SK-N-SH (cell line): ENCODE measurements at regions of chr9 and their contacts with region 1.

Region 1: GRCh38 chr9:128117613-128118471 is 9.7 kb downstream of the PTGES2 start:
- DNase-seq: peak; percentile 91
- H3K4me3 ChIP-seq: peak overlapping the region in 1 of 2 experiments; percentile 42; a peak in 1 of 4 replicates
- H3K27ac ChIP-seq: no peak overlapping the region
- H3K4me1 ChIP-seq: peaks cover 4 to 7% of the 10 kb centered on the region in 2 experiments; a peak in 1 of 4 replicates
- H3K27me3 ChIP-seq: no peaks in the 10 kb centered on the region
- CTCF ChIP-seq: peak; percentile 100
- EP300 ChIP-seq: no peak
- RAD21 ChIP-seq: peak; percentile 92

Region 2: DNA sequence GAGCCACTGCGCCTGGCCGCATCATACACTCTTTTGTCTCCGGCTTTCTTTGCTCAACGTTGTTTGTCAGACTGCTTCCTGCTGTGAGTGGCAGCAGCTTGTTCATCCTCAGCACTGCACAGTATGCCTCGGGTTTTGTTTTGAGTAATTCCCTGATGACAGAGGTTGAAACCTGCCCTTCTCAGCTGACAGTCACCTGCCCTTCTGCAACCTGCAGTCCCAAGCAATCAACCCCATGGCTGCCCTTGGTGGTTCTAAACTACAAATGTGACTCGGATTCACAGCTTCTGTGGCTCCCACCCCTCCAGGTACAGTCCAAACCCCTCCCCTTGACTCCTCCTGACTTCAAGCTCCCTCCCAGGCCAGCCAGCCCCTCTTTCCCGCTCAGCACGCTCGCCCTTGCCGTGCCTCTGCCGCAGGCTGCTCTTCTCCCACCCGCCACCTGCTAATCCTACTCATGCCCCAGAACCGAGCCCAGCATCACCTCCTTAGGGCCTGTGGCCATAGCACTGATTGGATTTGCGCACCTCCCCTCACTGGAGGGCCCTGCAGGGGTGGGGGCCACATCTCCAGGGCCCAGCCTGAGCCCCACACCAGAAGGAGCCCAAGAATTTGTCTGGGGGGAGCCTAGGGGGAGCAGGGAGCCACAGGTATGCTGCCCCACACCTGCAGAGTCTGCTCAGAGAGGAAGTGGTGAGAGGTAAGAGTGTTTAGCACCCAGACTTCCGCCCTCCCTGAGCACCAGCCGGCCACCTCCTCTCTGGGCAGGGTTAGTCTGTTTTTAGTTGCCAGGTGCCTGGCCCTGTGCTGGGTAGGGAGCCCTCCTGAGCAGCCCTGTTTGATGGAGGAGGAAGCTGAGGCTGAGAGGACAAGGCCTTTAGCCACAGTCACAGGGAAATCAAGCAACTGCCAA is 147.2 kb before region 1 on chr9:
- CTCF ChIA-PET with region 1: interaction called, 11 read pairs
- POLR2A ChIA-PET with region 1: interaction called, 3 read pairs
- DNase-seq: peak; percentile 10
- H3K4me3 ChIP-seq: no peak overlapping the region; a peak in 1 of 4 replicates
- H3K27ac ChIP-seq: peak overlapping the region; percentile 91 to 93
- H3K4me1 ChIP-seq: peaks cover 92 to 100% of the 10 kb centered on the region in 2 experiments
- H3K27me3 ChIP-seq: no peaks in the 10 kb centered on the region
- CTCF ChIP-seq: no peak
- EP300 ChIP-seq: no peak
- RAD21 ChIP-seq: no peak

Region 3: GRCh38 chr9:128051932-128052709 is 65.7 kb before region 1 on chr9:
- CTCF ChIA-PET with region 1: interaction called, 16 read pairs
- POLR2A ChIA-PET with region 1: no interaction called
- DNase-seq: no peak
- H3K4me3 ChIP-seq: no peak overlapping the region
- H3K27ac ChIP-seq: no peak overlapping the region
- H3K4me1 ChIP-seq: peaks cover 8 to 13% of the 10 kb centered on the region in 2 experiments; a peak in 3 of 4 replicates
- H3K27me3 ChIP-seq: no peaks in the 10 kb centered on the region
- CTCF ChIP-seq: no peak
- EP300 ChIP-seq: no peak
- RAD21 ChIP-seq: no peak

Region 4: GRCh38 chr9:128094166-128094967 is 23.5 kb before region 1 on chr9:
- CTCF ChIA-PET with region 1: interaction called, 246 read pairs
- POLR2A ChIA-PET with region 1: interaction called, 3 read pairs
- DNase-seq: peak; percentile 88
- H3K4me3 ChIP-seq: peak overlapping the region; percentile 28 to 49
- H3K27ac ChIP-seq: peak overlapping the region; percentile 77 to 96
- H3K4me1 ChIP-seq: peaks cover 57 to 60% of the 10 kb centered on the region in 2 experiments
- H3K27me3 ChIP-seq: no peaks in the 10 kb centered on the region
- CTCF ChIP-seq: no peak
- EP300 ChIP-seq: no peak
- RAD21 ChIP-seq: no peak

Region 5: DNA sequence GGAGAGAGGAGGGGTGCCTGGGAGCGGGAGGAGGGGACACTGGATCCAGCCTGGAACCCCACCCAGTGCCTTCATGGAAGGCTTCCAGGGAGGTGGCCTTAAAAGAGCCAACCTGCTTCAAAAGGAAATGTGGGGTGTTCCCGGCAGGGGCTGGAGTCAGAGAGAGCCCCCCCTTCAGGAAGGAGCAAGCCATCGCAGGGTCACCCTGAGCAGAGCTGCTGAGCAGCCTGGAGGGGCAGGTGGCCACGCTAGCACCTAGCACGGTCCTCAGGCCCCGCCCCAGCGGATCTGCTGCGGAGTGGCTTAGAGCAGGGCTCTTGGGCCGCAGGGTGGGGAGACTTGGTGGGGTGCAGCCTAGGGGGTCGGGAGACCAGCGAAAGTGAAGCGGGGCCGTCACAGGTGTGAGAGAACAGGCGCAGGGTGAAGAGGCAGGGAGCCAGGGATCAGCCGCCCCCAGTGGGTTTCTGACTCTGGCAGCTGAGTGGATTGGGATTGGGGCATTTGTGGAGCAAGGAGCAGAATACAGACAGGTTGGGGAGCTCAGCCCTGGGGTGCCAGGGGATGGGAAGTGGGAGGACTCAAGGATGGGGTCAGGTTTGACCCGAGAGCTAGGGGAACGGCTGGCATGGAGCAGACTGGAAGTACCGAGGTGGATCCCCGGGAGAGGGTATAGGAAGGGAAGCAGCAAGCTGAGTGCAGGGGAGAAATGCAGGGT is 32.9 kb after region 1 on chr9:
- CTCF ChIA-PET with region 1: interaction called, 20 read pairs
- POLR2A ChIA-PET with region 1: no interaction called
- DNase-seq: peak; percentile 64
- H3K4me3 ChIP-seq: no peak overlapping the region
- H3K27ac ChIP-seq: no peak overlapping the region
- H3K4me1 ChIP-seq: no peaks in the 10 kb centered on the region; a peak in 1 of 4 replicates
- H3K27me3 ChIP-seq: no peaks in the 10 kb centered on the region
- CTCF ChIP-seq: peak; percentile 44
- EP300 ChIP-seq: no peak
- RAD21 ChIP-seq: no peak

Region 6: DNA sequence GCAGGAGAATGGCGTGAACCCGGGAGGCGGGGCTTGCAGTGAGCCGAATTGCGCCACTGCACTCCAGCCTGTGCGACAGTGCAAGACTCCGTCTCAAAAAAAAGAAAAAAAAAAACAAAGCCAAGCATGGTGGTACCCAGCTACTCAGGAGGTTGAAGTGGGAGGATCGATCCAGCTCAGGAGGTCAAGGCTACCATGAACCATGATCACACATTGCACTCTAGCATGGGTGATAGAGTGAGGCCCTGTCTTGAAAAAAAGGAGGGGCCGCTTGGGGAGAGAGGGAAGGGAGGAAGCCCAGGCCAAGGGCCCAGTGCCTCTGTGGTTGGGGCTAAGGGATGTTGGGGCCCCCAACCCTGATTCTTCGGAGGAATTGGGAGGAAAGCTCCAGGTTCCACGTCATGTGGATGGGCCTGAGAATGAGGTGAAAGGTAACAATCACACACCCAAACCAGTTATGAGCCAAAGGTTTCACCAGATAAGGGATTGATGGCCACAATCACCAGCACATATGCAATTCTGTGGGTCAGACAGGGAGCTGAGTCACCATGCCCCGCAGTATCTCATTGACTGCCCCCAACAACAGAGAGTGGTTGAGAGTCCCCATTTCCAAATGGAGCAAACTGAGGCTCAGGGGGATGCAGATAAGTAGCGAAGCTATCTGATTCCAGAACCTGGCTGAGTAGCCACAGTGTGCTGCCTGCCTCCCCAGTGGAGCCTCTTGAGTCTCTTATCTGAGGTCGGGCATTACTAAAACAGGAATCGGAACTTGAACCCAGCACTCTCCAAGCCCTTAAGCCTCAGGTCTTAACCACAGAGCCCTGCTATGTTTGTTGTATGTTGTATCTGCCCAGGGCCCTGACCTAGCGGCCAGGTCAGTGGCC is 178.7 kb after region 1 on chr9:
- CTCF ChIA-PET with region 1: no interaction called
- POLR2A ChIA-PET with region 1: no interaction called
- DNase-seq: no peak
- H3K4me3 ChIP-seq: no peak overlapping the region
- H3K27ac ChIP-seq: no peak overlapping the region
- H3K4me1 ChIP-seq: peaks cover 5 to 8% of the 10 kb centered on the region in 2 experiments; a peak in 2 of 4 replicates
- H3K27me3 ChIP-seq: no peaks in the 10 kb centered on the region
- CTCF ChIP-seq: no peak
- EP300 ChIP-seq: no peak
- RAD21 ChIP-seq: no peak

Region 7: DNA sequence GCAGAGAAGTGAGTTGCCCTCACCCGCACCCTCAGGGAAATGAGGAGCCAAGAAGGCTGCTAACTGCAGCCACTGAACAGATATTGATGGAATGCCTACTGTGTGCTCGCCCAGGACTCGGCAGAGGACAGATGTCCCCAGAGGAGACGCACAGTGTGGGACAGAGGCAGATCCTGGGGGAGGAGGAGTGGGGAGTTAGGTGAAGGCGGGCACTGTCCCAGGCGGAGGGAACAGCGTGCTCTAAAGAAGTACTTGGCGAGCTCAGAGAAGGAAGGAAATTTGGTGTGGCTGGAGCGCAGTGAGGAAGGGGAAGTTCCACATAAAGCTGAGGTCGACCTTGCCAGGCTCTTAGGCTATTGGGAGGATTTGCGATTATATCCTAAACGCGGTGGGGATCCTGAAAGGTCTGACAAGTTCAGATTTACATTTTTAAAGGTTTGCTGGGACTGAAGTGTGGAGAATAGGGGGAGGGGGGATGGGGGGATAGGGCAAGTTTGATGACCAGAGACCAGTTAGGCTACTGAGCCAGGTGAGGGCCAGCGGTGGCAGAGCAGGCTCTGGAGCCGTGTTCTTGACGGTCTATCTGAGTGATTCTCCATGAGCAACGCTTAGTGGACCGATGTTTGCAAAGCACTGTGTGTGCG is 279.2 kb after region 1 on chr9:
- CTCF ChIA-PET with region 1: no interaction called
- POLR2A ChIA-PET with region 1: no interaction called
- DNase-seq: no peak
- H3K4me3 ChIP-seq: no peak overlapping the region
- H3K27ac ChIP-seq: no peak overlapping the region
- H3K4me1 ChIP-seq: no peaks in the 10 kb centered on the region
- H3K27me3 ChIP-seq: no peaks in the 10 kb centered on the region; the same call in 1 of the 2 replicates
- CTCF ChIP-seq: no peak
- EP300 ChIP-seq: no peak
- RAD21 ChIP-seq: no peak

Region 8: GRCh38 chr9:128927731-128928411 is 810.0 kb after region 1 on chr9:
- CTCF ChIA-PET with region 1: no interaction called
- POLR2A ChIA-PET with region 1: no interaction called
- DNase-seq: peak; percentile 85
- H3K4me3 ChIP-seq: no peak overlapping the region; a peak in 1 of 4 replicates
- H3K27ac ChIP-seq: no peak overlapping the region
- H3K4me1 ChIP-seq: no peaks in the 10 kb centered on the region; a peak in 1 of 4 replicates
- H3K27me3 ChIP-seq: no peaks in the 10 kb centered on the region
- CTCF ChIP-seq: peak; percentile 91
- EP300 ChIP-seq: no peak
- RAD21 ChIP-seq: peak; percentile 89